Naive thymus-derived CD4-positive, alpha-beta T cell (primary cell): ENCODE measurements at regions of chr2 and their contacts with region 1.

Region 1: DNA sequence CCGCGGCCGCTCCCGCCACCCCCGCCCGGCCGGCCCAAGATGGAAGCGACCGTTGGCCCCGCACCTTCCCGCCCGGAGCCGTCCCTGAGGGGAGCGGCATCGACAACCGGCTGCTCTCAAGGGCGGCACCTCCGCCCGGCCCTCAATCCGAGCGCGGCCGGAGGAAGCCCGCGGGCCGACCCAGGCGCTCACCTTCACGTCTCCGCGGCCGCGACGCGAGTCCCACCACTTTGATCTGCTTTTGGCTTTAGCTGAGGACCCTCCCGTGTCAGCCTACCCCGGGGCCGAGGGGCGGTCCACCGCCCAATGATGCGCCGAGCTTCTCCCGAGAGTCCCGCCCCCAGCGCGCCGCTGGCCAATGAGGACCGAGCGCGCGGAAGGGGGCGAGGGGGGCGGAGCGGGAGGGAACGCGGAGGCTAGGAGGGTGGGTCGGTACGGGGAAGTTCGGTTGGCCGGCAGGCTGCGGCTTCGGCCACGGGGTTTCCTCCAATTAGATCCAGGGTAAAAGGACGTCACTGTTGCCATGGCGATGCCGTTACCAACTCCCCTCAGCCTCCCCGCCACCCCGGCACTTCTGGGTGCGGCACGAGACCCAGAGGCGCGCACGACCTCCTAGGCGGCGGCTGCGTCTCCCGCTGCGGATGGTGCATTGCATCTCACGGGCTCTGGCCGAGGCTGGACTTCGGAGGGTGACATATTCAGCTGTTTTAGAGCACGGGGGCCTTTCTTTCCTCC is at the start of gene YWHAQ:
- DNase-seq: peak; percentile 92 to 98 (median 96)
- ATAC-seq: peak; percentile 95
- H3K4me3 ChIP-seq: peak within 1 kb of the TSS; percentile 75
- H3K4me3 Mint-ChIP-seq: peak within 1 kb of the TSS; percentile 90 to 99 (median 96)
- H3K27ac ChIP-seq: peak within 1 kb of the TSS; percentile 94
- H3K27ac Mint-ChIP-seq: peak within 1 kb of the TSS; percentile 78 to 97 (median 94)
- H3K4me1 ChIP-seq: peaks cover 13 to 22% of the 10 kb centered on the region in 2 donors
- H3K4me1 Mint-ChIP-seq: peaks cover 39 to 52% (median 51%) of the 10 kb centered on the region in 7 donors
- H3K27me3 ChIP-seq: no peaks in the 10 kb centered on the region
- H3K27me3 Mint-ChIP-seq: peaks cover 0 to 15% (median 0%) of the 10 kb centered on the region in 5 donors
- total RNA-seq, gene YWHAQ: 67.3 to 189 (median 83.3) TPM

Region 2: DNA sequence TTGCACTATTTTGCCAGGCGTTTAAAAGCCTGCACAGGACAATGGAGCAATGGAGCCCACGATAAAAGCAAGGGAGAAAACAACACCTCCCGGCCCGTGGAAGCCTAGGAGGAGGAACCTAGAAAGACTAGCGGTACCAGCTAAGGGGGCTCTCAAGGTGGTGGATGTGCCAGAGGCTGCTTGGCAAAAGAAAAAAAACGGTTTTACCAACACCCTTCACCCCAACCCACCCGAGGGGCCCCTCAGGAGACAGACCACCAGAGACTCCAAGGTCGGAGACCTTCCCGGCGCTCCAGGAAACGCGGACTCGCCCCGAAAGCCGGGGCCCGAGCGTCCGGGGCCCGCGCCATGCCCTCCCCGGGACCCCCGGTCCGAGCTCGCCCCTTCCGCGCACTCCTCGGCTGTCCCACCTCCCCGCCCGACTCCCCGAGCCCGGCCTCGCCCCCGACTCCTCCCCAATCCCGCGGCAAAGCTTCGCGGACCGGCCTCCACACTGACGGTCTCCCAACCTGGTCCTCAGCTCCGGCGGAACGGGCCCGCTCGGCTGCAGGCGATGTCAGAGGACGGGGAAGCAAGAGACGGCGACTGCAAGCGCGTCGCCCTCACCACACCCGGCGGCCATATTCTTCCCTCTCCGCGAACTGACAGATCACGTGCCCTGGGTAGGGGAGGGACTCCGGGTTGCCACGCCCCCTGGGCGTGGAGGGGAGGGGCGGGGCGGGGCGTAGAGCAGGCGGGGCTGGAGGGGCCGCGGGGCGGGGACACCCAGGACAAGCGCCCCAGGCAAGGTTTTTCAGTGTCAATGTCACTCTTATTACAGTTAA is 793.7 kb before region 1 on chr2 and contains the start of gene KIDINS220:
- CTCF ChIA-PET with region 1: no interaction called
- POLR2A ChIA-PET with region 1: no interaction called
- intact Hi-C with region 1: loop called in 1 of 2 experiments (anchors 2 kb)
- DNase-seq: peak; percentile 71 to 87 (median 82)
- ATAC-seq: peak; percentile 99
- H3K4me3 ChIP-seq: peak within 1 kb of the TSS; percentile 69
- H3K4me3 Mint-ChIP-seq: peak within 1 kb of the TSS; percentile 96 to 100 (median 99)
- H3K27ac ChIP-seq: peak within 1 kb of the TSS; percentile 78
- H3K27ac Mint-ChIP-seq: peak within 1 kb of the TSS; percentile 94 to 100 (median 98)
- H3K4me1 ChIP-seq: peaks cover 23 to 29% of the 10 kb centered on the region in 2 donors
- H3K4me1 Mint-ChIP-seq: peaks cover 26 to 60% (median 51%) of the 10 kb centered on the region in 7 donors
- H3K27me3 ChIP-seq: no peaks in the 10 kb centered on the region
- H3K27me3 Mint-ChIP-seq: peaks cover 0 to 5% (median 0%) of the 10 kb centered on the region in 5 donors
- total RNA-seq, gene KIDINS220: 34.5 to 54.3 (median 48.3) TPM

Region 3: GRCh38 chr2:9555297-9556141 is 75.4 kb before region 1 on chr2 and contains the start of gene ADAM17:
- CTCF ChIA-PET with region 1: no interaction called
- POLR2A ChIA-PET with region 1: interaction called, 21 read pairs
- intact Hi-C with region 1: loop called (anchors 1 kb)
- DNase-seq: peak; percentile 72 to 95 (median 80)
- ATAC-seq: peak; percentile 96
- H3K4me3 ChIP-seq: peak within 1 kb of the TSS; percentile 95
- H3K4me3 Mint-ChIP-seq: peak within 1 kb of the TSS; percentile 90 to 99 (median 96)
- H3K27ac ChIP-seq: peak within 1 kb of the TSS; percentile 97
- H3K27ac Mint-ChIP-seq: peak within 1 kb of the TSS; percentile 66 to 98 (median 96)
- H3K4me1 ChIP-seq: peaks cover 14 to 32% of the 10 kb centered on the region in 2 donors
- H3K4me1 Mint-ChIP-seq: peaks cover 35 to 63% (median 53%) of the 10 kb centered on the region in 7 donors
- H3K27me3 ChIP-seq: no peaks in the 10 kb centered on the region
- H3K27me3 Mint-ChIP-seq: no peaks in the 10 kb centered on the region
- total RNA-seq, gene ADAM17: 22.9 to 45.2 (median 25.9) TPM

Region 4: GRCh38 chr2:9656270-9656766 is 25.4 kb after region 1 on chr2:
- CTCF ChIA-PET with region 1: no interaction called
- POLR2A ChIA-PET with region 1: no interaction called
- intact Hi-C with region 1: loop called in 1 of 2 experiments (anchors 1 kb)
- DNase-seq: peak in 1 of 9 donors; percentile 63
- ATAC-seq: peak; percentile 86
- H3K4me3 ChIP-seq: no peak overlapping the region
- H3K4me3 Mint-ChIP-seq: peak overlapping the region in 1 of 10 donors; percentile 68
- H3K27ac ChIP-seq: no peak overlapping the region
- H3K27ac Mint-ChIP-seq: peak overlapping the region in 1 of 9 donors; percentile 83
- H3K4me1 ChIP-seq: peaks cover 0 to 11% of the 10 kb centered on the region in 2 donors
- H3K4me1 Mint-ChIP-seq: peaks cover 0 to 36% (median 0%) of the 10 kb centered on the region in 7 donors
- H3K27me3 ChIP-seq: no peaks in the 10 kb centered on the region
- H3K27me3 Mint-ChIP-seq: peaks cover 0 to 8% (median 0%) of the 10 kb centered on the region in 5 donors

Region 5: GRCh38 chr2:9782197-9782719 is 151.3 kb after region 1 on chr2:
- CTCF ChIA-PET with region 1: no interaction called
- POLR2A ChIA-PET with region 1: interaction called, 3 read pairs
- intact Hi-C with region 1: loop called (anchors 1 kb)
- DNase-seq: peak in 8 of 9 donors; percentile 32 to 75 (median 65)
- ATAC-seq: peak; percentile 86
- H3K4me3 ChIP-seq: no peak overlapping the region
- H3K4me3 Mint-ChIP-seq: peak overlapping the region in 9 of 10 donors; percentile 4 to 63 (median 31)
- H3K27ac ChIP-seq: peak overlapping the region; percentile 56
- H3K27ac Mint-ChIP-seq: peak overlapping the region; percentile 45 to 94 (median 88)
- H3K4me1 ChIP-seq: peaks cover 31 to 43% of the 10 kb centered on the region in 2 donors
- H3K4me1 Mint-ChIP-seq: peaks cover 23 to 68% (median 49%) of the 10 kb centered on the region in 7 donors
- H3K27me3 ChIP-seq: no peaks in the 10 kb centered on the region
- H3K27me3 Mint-ChIP-seq: no peaks in the 10 kb centered on the region

Region 6: DNA sequence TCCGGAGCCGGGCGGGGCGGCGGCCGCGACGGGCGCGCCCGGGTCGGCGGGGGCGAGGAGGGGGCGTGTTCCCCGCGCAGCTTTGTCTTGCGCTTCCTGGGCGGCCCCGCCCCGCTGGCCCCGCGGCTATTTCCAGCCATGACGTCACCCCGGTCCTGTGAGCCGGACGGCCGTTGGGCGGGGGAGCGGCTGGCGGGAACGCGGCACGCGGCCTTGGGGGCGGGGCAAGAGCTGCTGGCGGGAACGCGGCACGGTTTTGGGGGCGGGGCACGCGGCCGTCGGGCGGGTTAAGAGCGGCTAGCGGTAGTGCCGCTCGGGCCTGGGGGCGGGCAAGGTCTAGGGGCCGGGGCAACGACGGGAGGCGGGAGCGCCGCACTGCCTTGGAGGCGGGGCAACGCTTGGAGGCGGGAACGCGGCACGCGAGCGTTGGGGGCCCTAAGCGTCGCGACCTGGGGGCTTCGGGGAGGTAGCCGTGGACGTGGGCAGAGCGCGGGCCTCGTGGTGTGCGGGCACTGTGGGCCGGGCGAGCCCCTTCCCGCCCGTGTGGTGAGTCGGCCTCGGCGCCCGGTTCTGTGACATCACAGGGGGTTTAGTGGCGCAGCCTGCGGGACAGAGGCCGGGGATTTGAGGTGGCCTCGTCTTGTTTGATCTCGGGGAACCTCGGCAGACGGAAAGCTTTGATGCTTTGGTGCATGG is 413.1 kb after region 1 on chr2:
- CTCF ChIA-PET with region 1: no interaction called
- POLR2A ChIA-PET with region 1: no interaction called
- intact Hi-C with region 1: loop called in 1 of 2 experiments (anchors 5 kb)
- DNase-seq: peak; percentile 79 to 93 (median 89)
- ATAC-seq: peak; percentile 73
- H3K4me3 ChIP-seq: peak overlapping the region; percentile 48
- H3K4me3 Mint-ChIP-seq: peak overlapping the region; percentile 76 to 89 (median 84)
- H3K27ac ChIP-seq: peak overlapping the region; percentile 76
- H3K27ac Mint-ChIP-seq: peak overlapping the region; percentile 82 to 95 (median 88)
- H3K4me1 ChIP-seq: peaks cover 6% of the 10 kb centered on the region in 2 donors
- H3K4me1 Mint-ChIP-seq: peaks cover 14 to 35% (median 29%) of the 10 kb centered on the region in 7 donors
- H3K27me3 ChIP-seq: no peaks in the 10 kb centered on the region
- H3K27me3 Mint-ChIP-seq: peaks cover 0 to 31% (median 0%) of the 10 kb centered on the region in 5 donors

Region 7: DNA sequence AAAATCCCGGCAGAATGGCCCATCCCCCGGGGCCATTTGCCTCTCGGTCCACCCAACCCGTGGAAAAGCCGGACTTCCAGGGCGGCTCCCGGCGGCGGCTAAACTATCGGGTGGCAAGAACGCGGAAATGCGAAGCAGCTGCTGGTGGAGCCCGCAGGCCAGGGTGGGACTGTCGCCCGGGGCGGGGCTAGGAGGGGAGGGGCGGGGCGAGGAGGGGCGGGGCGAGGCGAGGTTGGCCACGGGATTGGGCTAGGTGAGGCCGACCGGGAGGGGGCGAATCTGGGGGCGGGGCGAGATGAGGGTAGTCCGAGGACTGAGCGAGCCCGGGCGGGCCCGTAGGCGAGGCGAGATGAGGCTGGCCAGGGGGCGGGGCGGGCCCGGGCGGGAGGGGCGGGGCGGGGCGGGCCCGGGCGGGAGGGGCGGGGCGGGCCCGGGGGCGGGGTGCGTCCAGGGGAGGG is 1524.0 kb after region 1 on chr2:
- CTCF ChIA-PET with region 1: no interaction called
- POLR2A ChIA-PET with region 1: no interaction called
- intact Hi-C with region 1: loop called in 1 of 2 experiments (anchors 2 kb)
- DNase-seq: peak; percentile 92 to 97 (median 96)
- ATAC-seq: peak; percentile 94
- H3K4me3 ChIP-seq: peak overlapping the region; percentile 76
- H3K4me3 Mint-ChIP-seq: peak overlapping the region; percentile 73 to 88 (median 84)
- H3K27ac ChIP-seq: peak overlapping the region; percentile 75
- H3K27ac Mint-ChIP-seq: peak overlapping the region; percentile 44 to 94 (median 90)
- H3K4me1 ChIP-seq: peaks cover 10 to 15% of the 10 kb centered on the region in 2 donors
- H3K4me1 Mint-ChIP-seq: peaks cover 10 to 22% (median 18%) of the 10 kb centered on the region in 7 donors
- H3K27me3 ChIP-seq: no peaks in the 10 kb centered on the region
- H3K27me3 Mint-ChIP-seq: peaks cover 0 to 10% (median 0%) of the 10 kb centered on the region in 5 donors